PC-9 (cell line): ENCODE measurements at regions of chr2 and their contacts with region 1.

Region 1: GRCh38 chr2:18378020-18378653 is 182.3 kb downstream of the RDH14 start:
- DNase-seq: peak; percentile 27 to 47
- H3K4me3 ChIP-seq: no peak overlapping the region
- H3K27ac ChIP-seq: no peak overlapping the region
- H3K4me1 ChIP-seq: no peaks in the 10 kb centered on the region
- H3K27me3 ChIP-seq: no peaks in the 10 kb centered on the region
- CTCF ChIP-seq: peak; percentile 95

Region 2: DNA sequence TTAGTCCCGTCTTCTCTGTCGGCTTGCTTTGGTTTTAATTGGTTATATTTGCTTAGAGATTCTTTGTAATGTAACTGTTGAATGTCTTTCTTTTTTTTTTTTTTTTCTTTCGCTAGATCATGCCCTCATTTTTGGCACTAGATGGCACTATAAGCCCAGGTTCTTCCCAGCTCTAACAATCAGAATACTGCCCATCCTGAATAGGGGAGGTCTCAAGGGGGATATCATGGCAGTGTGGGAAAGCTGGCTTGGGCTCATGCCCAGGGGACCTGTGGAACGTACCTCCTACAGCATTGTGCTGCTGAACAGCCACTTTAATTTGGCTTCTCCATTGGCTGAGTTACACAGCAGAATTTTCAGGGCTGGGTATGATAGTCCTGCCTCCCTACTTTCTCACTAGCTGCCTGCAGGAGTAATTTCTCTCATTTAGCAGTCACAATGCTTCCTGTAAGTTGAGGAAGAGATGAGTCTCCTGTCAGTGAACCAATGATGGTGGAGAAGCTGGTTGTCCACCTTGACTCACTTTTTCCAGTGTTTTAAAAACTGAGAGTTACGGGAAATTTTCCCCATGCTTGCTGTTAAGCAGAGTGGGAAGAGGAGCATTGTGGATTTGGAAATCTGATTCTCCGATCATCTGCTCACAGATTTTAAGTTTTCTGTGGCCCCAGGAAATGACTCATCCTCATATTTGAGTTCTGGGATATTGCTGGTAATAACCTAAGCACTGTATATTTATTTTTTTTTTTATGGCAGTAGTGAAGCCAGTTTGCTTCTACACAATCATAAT is 907.1 kb before region 1 on chr2:
- CTCF ChIA-PET with region 1: no interaction called
- POLR2A ChIA-PET with region 1: no interaction called
- intact Hi-C with region 1: loop called (anchors 2 kb)
- DNase-seq: peak in 1 of 2 experiments; percentile 20
- H3K4me3 ChIP-seq: no peak overlapping the region
- H3K27ac ChIP-seq: no peak overlapping the region
- H3K4me1 ChIP-seq: no peaks in the 10 kb centered on the region
- H3K27me3 ChIP-seq: no peaks in the 10 kb centered on the region
- CTCF ChIP-seq: peak; percentile 75

Region 3: DNA sequence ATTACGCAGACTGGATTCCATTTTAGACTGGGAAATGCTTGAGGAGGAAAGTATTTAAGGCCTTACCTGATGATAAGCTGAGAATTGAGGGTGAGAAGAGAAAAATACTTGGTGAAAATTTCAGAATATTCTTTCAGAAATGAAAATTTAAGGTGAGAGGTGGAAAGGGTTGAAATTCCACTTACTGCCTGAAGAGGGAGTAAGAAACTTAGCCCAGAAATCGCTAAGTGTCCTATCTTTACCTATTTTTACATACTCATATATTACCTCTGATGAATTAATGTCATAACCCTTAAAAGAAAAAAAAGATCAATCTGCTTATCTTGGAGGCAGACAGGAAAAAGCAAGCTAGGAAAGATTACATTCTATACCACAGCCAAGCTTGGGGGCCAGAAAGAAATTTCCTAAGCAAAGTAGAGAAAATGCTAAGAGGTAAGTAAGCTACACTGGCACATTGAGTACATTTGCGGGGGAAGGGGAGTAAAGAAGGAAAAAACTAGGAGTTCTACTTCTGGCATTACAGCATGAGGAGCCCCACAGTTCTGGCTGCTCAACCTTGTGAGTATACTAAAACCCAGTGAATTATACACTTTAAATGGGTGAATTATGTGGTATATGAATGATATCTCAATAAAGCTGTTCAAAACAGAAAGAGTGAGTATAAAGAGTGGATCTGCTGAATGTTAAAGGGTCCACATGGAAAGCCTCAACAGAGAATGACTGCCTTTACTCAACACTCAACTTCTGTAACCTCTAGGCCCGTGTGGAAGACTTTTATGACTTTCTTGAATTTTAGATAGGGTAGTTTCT is 658.4 kb before region 1 on chr2:
- CTCF ChIA-PET with region 1: no interaction called
- POLR2A ChIA-PET with region 1: no interaction called
- intact Hi-C with region 1: loop called (anchors 1 kb)
- DNase-seq: no peak
- H3K4me3 ChIP-seq: no peak overlapping the region
- H3K27ac ChIP-seq: no peak overlapping the region
- H3K4me1 ChIP-seq: no peaks in the 10 kb centered on the region
- H3K27me3 ChIP-seq: no peaks in the 10 kb centered on the region
- CTCF ChIP-seq: peak; percentile 90

Region 4: GRCh38 chr2:17729880-17730279 is 648.3 kb before region 1 on chr2:
- CTCF ChIA-PET with region 1: no interaction called
- POLR2A ChIA-PET with region 1: no interaction called
- intact Hi-C with region 1: no loop called
- DNase-seq: no peak
- H3K4me3 ChIP-seq: no peak overlapping the region
- H3K27ac ChIP-seq: no peak overlapping the region
- H3K4me1 ChIP-seq: no peaks in the 10 kb centered on the region
- H3K27me3 ChIP-seq: no peaks in the 10 kb centered on the region
- CTCF ChIP-seq: no peak

Region 5: GRCh38 chr2:17851731-17852585 is 526.2 kb before region 1 on chr2:
- CTCF ChIA-PET with region 1: no interaction called
- POLR2A ChIA-PET with region 1: no interaction called
- intact Hi-C with region 1: loop called (anchors 1 kb)
- DNase-seq: peak; percentile 55 to 60
- H3K4me3 ChIP-seq: no peak overlapping the region
- H3K27ac ChIP-seq: no peak overlapping the region
- H3K4me1 ChIP-seq: peaks cover 1% of the 10 kb centered on the region; the same call in 1 of the 2 replicates
- H3K27me3 ChIP-seq: no peaks in the 10 kb centered on the region
- CTCF ChIP-seq: peak; percentile 99

Region 6: GRCh38 chr2:18178736-18179349 is 199.3 kb before region 1 on chr2:
- CTCF ChIA-PET with region 1: no interaction called
- POLR2A ChIA-PET with region 1: no interaction called
- intact Hi-C with region 1: loop called (anchors 2 kb)
- DNase-seq: peak in 1 of 2 experiments; percentile 9
- H3K4me3 ChIP-seq: no peak overlapping the region
- H3K27ac ChIP-seq: no peak overlapping the region
- H3K4me1 ChIP-seq: 0 out of 2 replicates have a peak, but pooled peaks cover 4% of the 10 kb centered on the region
- H3K27me3 ChIP-seq: no peaks in the 10 kb centered on the region
- CTCF ChIP-seq: peak; percentile 85

Region 7: GRCh38 chr2:18232731-18233438 is 145.3 kb before region 1 on chr2:
- CTCF ChIA-PET with region 1: no interaction called
- POLR2A ChIA-PET with region 1: no interaction called
- intact Hi-C with region 1: loop called (anchors 10 kb)
- DNase-seq: peak in 1 of 2 experiments; percentile 89
- H3K4me3 ChIP-seq: no peak overlapping the region; the same call in 1 of the 2 replicates
- H3K27ac ChIP-seq: peak overlapping the region; percentile 46
- H3K4me1 ChIP-seq: peaks cover 29% of the 10 kb centered on the region
- H3K27me3 ChIP-seq: no peaks in the 10 kb centered on the region
- CTCF ChIP-seq: no peak